HCT116 (cell line): ENCODE measurements at regions of chr5 and their contacts with region 1.

Region 1: GRCh38 chr5:59188419-59189225 is 605.7 kb downstream of the RAB3C start:
- DNase-seq: peak; percentile 46
- ATAC-seq: peak; percentile 89
- H3K4me3 ChIP-seq: no peak overlapping the region
- H3K27ac ChIP-seq: no peak overlapping the region
- H3K4me1 ChIP-seq: no peaks in the 10 kb centered on the region
- H3K27me3 ChIP-seq: peaks cover 9% of the 10 kb centered on the region; the same call in 1 of the 2 replicates
- CTCF ChIP-seq: peak; percentile 53 to 79 (median 66); a peak in 5 of 6 replicates
- POLR2A ChIP-seq: no peak
- RAD21 ChIP-seq: peak; percentile 81

Region 2: GRCh38 chr5:59342181-59342580 is 153.6 kb after region 1 on chr5:
- CTCF ChIA-PET with region 1: no interaction called
- POLR2A ChIA-PET with region 1: no interaction called
- RAD21 ChIA-PET with region 1: no interaction called
- intact Hi-C with region 1: no loop called
- DNase-seq: no peak
- ATAC-seq: no peak
- H3K4me3 ChIP-seq: no peak overlapping the region
- H3K27ac ChIP-seq: no peak overlapping the region
- H3K4me1 ChIP-seq: no peaks in the 10 kb centered on the region
- H3K27me3 ChIP-seq: peaks cover 22% of the 10 kb centered on the region
- CTCF ChIP-seq: no peak
- POLR2A ChIP-seq: no peak
- RAD21 ChIP-seq: no peak

Region 3: DNA sequence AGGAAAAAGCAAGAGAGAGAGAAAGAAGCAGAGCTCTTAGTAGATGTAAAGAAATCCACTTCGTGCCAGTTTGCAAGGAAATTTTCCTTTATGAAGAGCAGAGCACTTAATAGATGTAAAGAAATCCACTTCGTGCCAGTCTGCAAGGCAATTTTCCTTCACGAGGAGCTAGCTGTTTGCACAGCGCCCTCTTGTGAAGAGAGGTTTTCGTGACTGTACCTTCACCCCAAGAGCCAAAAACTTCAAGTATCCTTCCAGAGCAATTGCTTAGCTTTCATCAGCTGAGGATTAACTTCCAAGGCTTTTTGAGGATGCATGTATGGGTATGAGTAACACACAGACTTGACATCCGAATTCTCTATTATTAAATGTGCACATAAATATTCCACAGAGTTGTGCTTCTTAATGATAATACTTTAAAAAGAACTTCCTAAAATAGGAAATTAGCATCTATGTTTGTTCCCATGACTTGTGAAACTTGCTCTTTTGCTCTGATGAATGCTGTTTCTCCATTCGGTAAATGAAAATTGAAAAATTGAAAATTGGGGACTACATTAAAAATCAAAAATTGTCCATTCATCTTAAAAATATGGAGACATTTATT is 179.3 kb after region 1 on chr5:
- CTCF ChIA-PET with region 1: interaction called, 50 read pairs
- POLR2A ChIA-PET with region 1: no interaction called
- RAD21 ChIA-PET with region 1: no interaction called
- intact Hi-C with region 1: loop called (anchors 1 kb)
- DNase-seq: peak; percentile 36
- ATAC-seq: peak; percentile 74
- H3K4me3 ChIP-seq: no peak overlapping the region
- H3K27ac ChIP-seq: no peak overlapping the region
- H3K4me1 ChIP-seq: no peaks in the 10 kb centered on the region
- H3K27me3 ChIP-seq: peaks cover 21% of the 10 kb centered on the region
- CTCF ChIP-seq: peak; percentile 49 to 79 (median 72); a peak in 5 of 6 replicates
- POLR2A ChIP-seq: no peak
- RAD21 ChIP-seq: peak; percentile 52

Region 4: GRCh38 chr5:59390074-59390659 is 201.5 kb after region 1 on chr5:
- CTCF ChIA-PET with region 1: interaction called, 11 read pairs
- POLR2A ChIA-PET with region 1: no interaction called
- RAD21 ChIA-PET with region 1: no interaction called
- intact Hi-C with region 1: no loop called
- DNase-seq: no peak
- ATAC-seq: no peak
- H3K4me3 ChIP-seq: no peak overlapping the region
- H3K27ac ChIP-seq: no peak overlapping the region
- H3K4me1 ChIP-seq: no peaks in the 10 kb centered on the region
- H3K27me3 ChIP-seq: peaks cover 11% of the 10 kb centered on the region
- CTCF ChIP-seq: peak; percentile 41 to 71 (median 44); a peak in 5 of 6 replicates
- POLR2A ChIP-seq: no peak
- RAD21 ChIP-seq: peak; percentile 56

Region 5: GRCh38 chr5:59598547-59598874 is 409.9 kb after region 1 on chr5:
- CTCF ChIA-PET with region 1: no interaction called
- POLR2A ChIA-PET with region 1: no interaction called
- RAD21 ChIA-PET with region 1: no interaction called
- intact Hi-C with region 1: no loop called
- DNase-seq: no peak
- ATAC-seq: no peak
- H3K4me3 ChIP-seq: no peak overlapping the region
- H3K27ac ChIP-seq: no peak overlapping the region
- H3K4me1 ChIP-seq: no peaks in the 10 kb centered on the region
- H3K27me3 ChIP-seq: peaks cover 16% of the 10 kb centered on the region
- CTCF ChIP-seq: no peak
- POLR2A ChIP-seq: no peak
- RAD21 ChIP-seq: no peak

Region 6: GRCh38 chr5:59673438-59674058 is 484.9 kb after region 1 on chr5:
- CTCF ChIA-PET with region 1: interaction called, 9 read pairs
- POLR2A ChIA-PET with region 1: no interaction called
- RAD21 ChIA-PET with region 1: no interaction called
- intact Hi-C with region 1: loop called (anchors 5 kb)
- DNase-seq: peak; percentile 8
- ATAC-seq: peak; percentile 55; the same call in 1 of the 2 replicates
- H3K4me3 ChIP-seq: no peak overlapping the region
- H3K27ac ChIP-seq: no peak overlapping the region
- H3K4me1 ChIP-seq: no peaks in the 10 kb centered on the region
- H3K27me3 ChIP-seq: 0 out of 2 replicates have a peak, but pooled peaks cover 5% of the 10 kb centered on the region
- CTCF ChIP-seq: peak; percentile 33 to 82 (median 64); a peak in 5 of 6 replicates
- POLR2A ChIP-seq: no peak
- RAD21 ChIP-seq: peak; percentile 57